Endothelial cell of umbilical vein (primary cell): ENCODE measurements at regions of chr18 and their contacts with region 1.

Region 1: DNA sequence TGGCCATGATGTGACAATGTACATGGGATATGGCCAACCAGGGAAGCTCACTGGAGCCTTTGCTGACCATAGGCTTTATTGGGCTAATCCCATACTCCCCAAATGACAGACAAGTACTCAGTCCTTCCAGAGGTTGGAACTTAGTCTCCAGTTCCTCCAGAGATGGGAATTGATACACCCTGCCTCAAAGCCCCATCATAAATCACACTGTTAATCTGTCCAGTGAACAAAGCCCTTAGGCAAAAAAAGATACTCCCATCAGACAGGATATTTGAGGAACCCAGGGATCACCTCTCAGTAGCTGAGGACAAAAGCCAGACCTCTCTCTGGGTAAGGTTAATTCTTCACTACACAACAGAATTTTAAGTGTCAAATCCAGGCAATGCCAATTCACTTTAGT is 247.5 kb upstream of the CDH20 start:
- DNase-seq: no peak
- H3K4me3 ChIP-seq: no peak overlapping the region
- H3K27ac ChIP-seq: no peak overlapping the region
- H3K4me1 ChIP-seq: no peaks in the 10 kb centered on the region
- H3K27me3 ChIP-seq: no peaks in the 10 kb centered on the region
- CTCF ChIP-seq: no peak
- POLR2A ChIP-seq: no peak

Region 2: DNA sequence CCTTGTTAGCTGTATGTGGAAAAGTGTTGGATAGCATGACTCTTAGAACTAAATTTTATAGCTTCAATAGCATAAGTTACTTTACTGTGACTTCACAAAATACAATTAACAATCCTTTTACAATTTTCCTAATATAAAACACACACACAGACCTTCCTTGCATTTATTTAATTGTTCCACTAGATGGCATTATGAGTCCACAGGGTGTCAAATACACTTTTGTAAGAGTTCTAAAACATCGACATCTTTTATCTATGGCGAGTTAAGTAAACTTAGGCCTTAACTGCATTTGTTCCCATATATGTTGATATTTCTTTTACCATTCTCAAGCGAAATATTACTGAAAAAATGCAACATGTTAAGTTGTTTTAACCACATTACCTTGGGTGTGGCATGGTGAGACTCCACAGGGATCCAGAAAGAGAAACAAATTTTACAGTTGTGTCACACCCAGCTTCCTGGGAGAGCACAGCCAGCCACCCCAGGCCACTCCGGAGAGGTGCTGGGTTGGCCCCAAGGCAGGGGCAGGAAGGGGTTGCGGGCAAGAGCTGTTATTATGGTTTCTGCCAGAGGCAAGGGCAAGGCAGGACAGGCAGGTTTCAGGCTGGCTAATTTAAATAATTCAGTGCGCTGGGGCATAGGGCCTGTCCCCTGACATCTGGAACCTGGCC is 400.8 kb before region 1 on chr18:
- CTCF ChIA-PET with region 1: interaction called, 5 read pairs
- POLR2A ChIA-PET with region 1: no interaction called
- dilution Hi-C with region 1: no loop called
- intact Hi-C with region 1: loop called (anchors 5 kb)
- DNase-seq: peak; percentile 57
- H3K4me3 ChIP-seq: no peak overlapping the region
- H3K27ac ChIP-seq: no peak overlapping the region
- H3K4me1 ChIP-seq: no peaks in the 10 kb centered on the region
- H3K27me3 ChIP-seq: peaks cover 0 to 1% of the 10 kb centered on the region in 2 experiments
- CTCF ChIP-seq: peak; percentile 35 to 37
- POLR2A ChIP-seq: no peak

Region 3: GRCh38 chr18:61589713-61590065 is 503.9 kb after region 1 on chr18:
- CTCF ChIA-PET with region 1: no interaction called
- POLR2A ChIA-PET with region 1: no interaction called
- dilution Hi-C with region 1: no loop called
- intact Hi-C with region 1: no loop called
- DNase-seq: peak; percentile 65
- H3K4me3 ChIP-seq: no peak overlapping the region
- H3K27ac ChIP-seq: no peak overlapping the region
- H3K4me1 ChIP-seq: peaks cover 13% of the 10 kb centered on the region
- H3K27me3 ChIP-seq: no peaks in the 10 kb centered on the region
- CTCF ChIP-seq: no peak
- POLR2A ChIP-seq: no peak